PC-9 (cell line): ENCODE measurements at regions of chr14 and their contacts with region 1.

Region 1: GRCh38 chr14:62179367-62180018 is 417.3 kb downstream of the SNAPC1 start:
- DNase-seq: peak; percentile 46 to 55
- H3K4me3 ChIP-seq: no peak overlapping the region
- H3K27ac ChIP-seq: no peak overlapping the region
- H3K4me1 ChIP-seq: no peaks in the 10 kb centered on the region
- H3K27me3 ChIP-seq: peaks cover 2% of the 10 kb centered on the region; the same call in 1 of the 2 replicates
- CTCF ChIP-seq: peak; percentile 81

Region 2: DNA sequence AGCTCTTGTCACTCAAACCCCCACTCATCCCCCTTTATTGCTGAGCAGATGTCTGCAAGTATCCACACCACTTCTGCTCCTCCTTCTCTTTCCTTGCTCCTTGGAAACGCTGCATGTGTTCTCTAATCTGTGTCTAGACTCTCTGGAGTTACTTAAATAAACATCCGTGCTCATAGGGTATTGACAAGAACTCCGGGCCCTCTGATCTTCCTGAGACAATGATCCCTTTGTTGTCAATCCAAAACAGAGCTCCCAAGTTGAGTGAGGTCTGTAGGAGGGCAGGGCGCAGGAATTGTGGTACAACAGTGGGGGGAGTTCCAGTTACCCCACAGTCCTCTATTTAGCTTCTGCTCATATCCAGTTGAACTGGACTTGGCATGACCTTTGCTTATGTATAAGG is 71.7 kb after region 1 on chr14:
- CTCF ChIA-PET with region 1: no interaction called
- POLR2A ChIA-PET with region 1: no interaction called
- intact Hi-C with region 1: no loop called
- DNase-seq: no peak
- H3K4me3 ChIP-seq: no peak overlapping the region
- H3K27ac ChIP-seq: no peak overlapping the region
- H3K4me1 ChIP-seq: no peaks in the 10 kb centered on the region
- H3K27me3 ChIP-seq: 0 out of 2 replicates have a peak, but pooled peaks cover 5% of the 10 kb centered on the region
- CTCF ChIP-seq: no peak

Region 3: DNA sequence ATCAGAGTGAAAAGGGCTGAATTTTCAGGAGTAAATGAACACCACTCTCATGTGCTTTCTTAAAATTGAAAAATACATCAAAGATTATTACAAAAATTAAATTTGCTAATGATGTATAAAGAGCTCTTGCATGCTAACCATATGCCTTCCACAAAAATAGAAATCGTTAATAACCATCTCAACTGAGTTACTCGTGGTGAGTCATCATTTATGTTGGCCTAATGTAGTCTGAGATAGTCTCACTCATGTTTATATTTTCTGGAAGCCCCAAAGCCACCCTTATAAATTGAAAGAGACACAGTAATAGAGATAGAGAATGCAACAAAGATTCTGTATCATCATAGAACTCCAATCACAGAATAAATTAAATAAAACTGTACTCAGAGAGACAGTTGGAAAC is 734.5 kb after region 1 on chr14:
- CTCF ChIA-PET with region 1: interaction called, 13 read pairs
- POLR2A ChIA-PET with region 1: no interaction called
- intact Hi-C with region 1: no loop called
- DNase-seq: no peak
- H3K4me3 ChIP-seq: no peak overlapping the region
- H3K27ac ChIP-seq: no peak overlapping the region
- H3K4me1 ChIP-seq: no peaks in the 10 kb centered on the region
- H3K27me3 ChIP-seq: no peaks in the 10 kb centered on the region
- CTCF ChIP-seq: no peak

Region 4: DNA sequence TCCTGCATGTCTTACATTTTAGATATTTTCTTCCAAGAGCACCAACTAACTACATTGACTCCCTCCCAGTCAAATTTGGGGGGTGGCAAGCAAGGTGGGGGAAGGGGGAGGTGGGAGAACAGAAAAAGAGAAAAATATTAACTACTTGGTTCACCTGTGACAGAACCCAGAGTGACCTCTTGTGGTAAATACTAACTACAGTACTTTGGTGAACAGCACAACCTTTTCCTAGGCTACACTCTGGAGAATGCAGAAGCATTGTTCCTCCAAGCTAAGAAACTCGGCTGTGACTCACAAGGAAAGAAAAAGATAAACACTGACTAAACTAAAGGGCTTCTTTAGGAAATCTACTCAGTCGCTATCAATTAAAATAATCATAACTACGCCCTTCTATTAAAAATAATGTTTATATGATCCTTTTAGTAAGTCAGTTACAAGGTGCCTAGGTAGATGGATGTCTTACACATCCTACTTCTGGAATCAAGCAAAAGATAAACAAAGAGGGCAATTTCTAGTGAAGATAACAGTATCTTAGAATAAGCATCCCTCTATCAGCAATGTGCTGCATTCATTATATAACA is 860.4 kb after region 1 on chr14:
- CTCF ChIA-PET with region 1: no interaction called
- POLR2A ChIA-PET with region 1: interaction called, 6 read pairs
- intact Hi-C with region 1: loop called (anchors 1 kb)
- DNase-seq: peak; percentile 27 to 78
- H3K4me3 ChIP-seq: no peak overlapping the region
- H3K27ac ChIP-seq: no peak overlapping the region
- H3K4me1 ChIP-seq: no peaks in the 10 kb centered on the region
- H3K27me3 ChIP-seq: no peaks in the 10 kb centered on the region
- CTCF ChIP-seq: peak; percentile 64

Region 5: DNA sequence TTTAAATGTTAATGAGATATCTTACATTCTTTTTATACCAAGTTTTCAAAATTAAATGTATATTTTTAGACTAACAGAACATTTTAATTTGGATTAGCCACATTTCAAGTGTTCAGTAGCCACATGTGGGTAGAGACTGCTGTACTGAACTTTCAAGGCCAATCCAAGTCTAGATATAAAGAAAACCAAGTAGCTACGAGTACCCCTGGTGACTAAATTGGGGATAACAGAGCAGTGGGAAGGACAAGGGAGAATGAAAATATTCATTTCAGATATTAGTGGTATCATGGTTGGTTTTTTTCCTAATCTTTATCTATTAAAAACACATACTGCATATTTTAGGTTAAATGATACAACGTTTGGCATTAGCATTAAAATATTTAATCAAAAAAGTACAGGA is 955.3 kb after region 1 on chr14:
- CTCF ChIA-PET with region 1: no interaction called
- POLR2A ChIA-PET with region 1: no interaction called
- intact Hi-C with region 1: loop called (anchors 5 kb)
- DNase-seq: no peak
- H3K4me3 ChIP-seq: no peak overlapping the region
- H3K27ac ChIP-seq: no peak overlapping the region
- H3K4me1 ChIP-seq: no peaks in the 10 kb centered on the region
- H3K27me3 ChIP-seq: no peaks in the 10 kb centered on the region
- CTCF ChIP-seq: peak; percentile 62

Region 6: GRCh38 chr14:63174760-63175211 is 995.3 kb after region 1 on chr14:
- CTCF ChIA-PET with region 1: no interaction called
- POLR2A ChIA-PET with region 1: no interaction called
- intact Hi-C with region 1: loop called (anchors 5 kb)
- DNase-seq: peak in 1 of 2 experiments; percentile 38
- H3K4me3 ChIP-seq: no peak overlapping the region
- H3K27ac ChIP-seq: no peak overlapping the region
- H3K4me1 ChIP-seq: no peaks in the 10 kb centered on the region
- H3K27me3 ChIP-seq: no peaks in the 10 kb centered on the region
- CTCF ChIP-seq: peak; percentile 64

Region 7: DNA sequence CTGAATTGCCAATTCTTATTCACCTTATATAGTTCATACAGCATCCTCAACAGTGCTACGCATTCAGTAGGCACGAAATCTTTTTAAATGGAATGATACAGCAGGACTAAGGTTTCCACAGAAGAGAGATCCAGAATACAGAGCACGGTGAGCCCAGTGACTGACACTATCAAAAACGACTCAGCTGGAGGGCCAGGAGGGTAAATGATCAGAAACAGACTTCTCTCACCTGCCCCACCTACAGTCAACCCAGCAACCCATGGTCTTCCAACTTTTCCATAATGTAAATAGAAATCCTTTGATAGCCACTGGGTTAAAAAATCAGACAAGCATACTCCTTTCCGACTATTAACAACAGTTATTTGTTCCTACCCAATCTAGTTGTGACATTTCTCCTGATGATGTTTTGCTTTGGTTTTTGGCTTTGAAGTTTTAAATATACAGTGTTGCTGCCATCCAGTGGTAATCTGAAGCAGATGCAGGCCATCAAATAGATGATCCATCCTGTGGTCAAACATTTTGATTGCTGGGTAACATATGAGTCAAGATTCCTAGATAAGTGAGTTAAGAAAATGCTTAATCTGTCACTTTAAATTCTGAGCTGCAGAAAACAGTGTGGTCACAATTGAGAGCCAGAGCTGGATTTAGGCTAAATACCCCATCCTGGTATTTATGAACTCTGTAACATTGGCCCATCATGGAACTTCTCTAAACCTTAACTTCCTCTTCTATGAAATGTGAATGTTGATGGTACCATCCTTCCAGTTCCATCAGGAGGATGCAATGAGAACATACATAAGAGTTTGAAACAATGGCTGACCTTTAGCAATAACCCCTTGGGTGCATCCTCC is 1097.2 kb after region 1 on chr14:
- CTCF ChIA-PET with region 1: interaction called, 3 read pairs
- POLR2A ChIA-PET with region 1: no interaction called
- intact Hi-C with region 1: loop called (anchors 1 kb)
- DNase-seq: peak; percentile 3 to 47
- H3K4me3 ChIP-seq: no peak overlapping the region
- H3K27ac ChIP-seq: no peak overlapping the region
- H3K4me1 ChIP-seq: no peaks in the 10 kb centered on the region
- H3K27me3 ChIP-seq: no peaks in the 10 kb centered on the region
- CTCF ChIP-seq: peak; percentile 92